GM18951 (cell line): ENCODE measurements at regions of chr12 and their contacts with region 1.

Region 1: DNA sequence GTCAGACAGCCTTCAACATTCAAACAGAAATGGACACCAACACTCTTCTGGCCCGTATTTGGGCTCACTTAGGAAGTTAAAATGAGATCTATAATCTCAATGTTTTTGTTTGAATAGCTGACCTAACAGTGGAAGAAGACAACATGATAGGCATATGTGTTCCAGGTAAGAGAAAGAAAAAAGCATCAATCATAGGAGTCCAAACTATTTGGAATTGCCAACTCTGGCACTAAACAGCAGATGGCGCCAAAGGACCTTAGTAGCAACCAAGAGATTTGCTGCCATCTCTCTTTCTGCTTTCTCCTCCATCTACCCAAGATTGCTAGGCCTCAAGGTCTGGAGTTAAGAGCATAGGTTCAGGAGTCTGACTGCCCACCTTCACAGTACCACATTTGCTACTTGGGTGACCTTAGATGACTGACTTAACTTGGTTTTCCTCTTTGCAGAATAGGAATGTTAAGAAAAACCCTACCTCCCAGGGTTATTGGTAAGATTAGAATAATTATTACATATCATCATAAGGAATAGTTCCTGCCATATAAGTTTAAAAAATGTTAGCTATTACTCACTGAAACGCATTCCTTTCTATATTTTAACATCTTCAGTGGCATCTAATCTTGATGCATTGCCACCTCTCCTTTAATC is 30.2 kb downstream of the PEX5 start:
- POLR2A ChIP-seq: no peak

Region 2: GRCh38 chr12:7460375-7461259 is 240.9 kb after region 1 on chr12:
- in situ Hi-C with region 1: loop called (anchors 10 kb)
- POLR2A ChIP-seq: no peak

Region 3: DNA sequence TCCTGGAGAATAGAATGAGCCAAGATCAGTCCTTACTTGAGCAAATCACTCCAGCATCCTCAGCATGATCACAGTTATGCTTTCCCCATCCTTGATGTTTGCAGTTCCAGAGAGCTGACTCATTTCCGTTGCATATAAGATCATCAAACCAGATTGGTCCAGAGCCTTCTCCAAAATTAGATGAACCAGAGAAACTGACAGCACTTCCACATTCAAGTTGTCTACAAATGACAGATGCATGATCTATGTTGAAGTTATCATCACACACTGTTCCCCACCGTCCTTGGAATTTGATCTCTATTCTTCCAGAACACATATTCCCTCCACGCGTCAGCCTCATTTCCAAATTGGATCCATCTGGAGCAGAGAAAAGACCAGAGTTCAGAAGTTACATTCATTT is 279.1 kb after region 1 on chr12:
- in situ Hi-C with region 1: no loop called
- POLR2A ChIP-seq: no peak

Region 4: DNA sequence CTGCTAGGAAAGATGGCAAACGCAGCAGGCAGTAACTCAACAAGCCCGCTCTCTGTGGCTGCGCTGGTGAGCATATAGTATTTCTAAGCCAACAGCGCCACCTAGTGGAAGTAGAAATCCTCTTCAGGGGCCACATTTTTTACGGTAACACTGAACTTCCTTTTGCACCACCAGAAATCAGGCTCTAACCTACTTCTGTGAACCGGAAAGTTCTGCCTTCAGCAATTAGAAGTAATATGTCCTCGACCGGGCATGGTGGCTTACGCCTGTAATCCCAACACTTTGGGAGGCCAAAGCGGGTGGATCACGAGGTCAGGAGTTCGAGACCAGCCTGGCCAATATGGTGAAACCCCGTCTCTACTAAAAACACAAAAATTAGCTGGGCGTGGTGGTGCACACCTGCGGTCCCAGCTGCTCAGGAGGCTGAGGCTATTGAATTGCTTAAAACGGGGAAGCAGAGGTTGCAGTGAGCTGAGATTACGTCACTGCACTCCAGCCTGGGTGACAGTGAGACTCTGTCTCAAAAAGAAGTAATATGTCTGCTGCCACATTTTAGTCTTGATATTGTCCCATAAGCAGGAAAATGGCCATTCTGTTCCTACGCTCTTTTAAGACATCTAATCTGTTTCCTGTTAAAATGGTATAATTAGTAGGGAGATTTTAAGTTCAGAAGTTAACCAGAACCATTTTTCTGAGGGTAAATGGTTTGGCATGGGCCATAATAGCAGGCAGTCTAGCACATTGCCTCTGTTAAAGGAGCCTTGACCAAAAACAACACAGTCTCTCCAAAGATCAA is 419.2 kb after region 1 on chr12:
- in situ Hi-C with region 1: loop called (anchors 10 kb)
- POLR2A ChIP-seq: no peak

Region 5: DNA sequence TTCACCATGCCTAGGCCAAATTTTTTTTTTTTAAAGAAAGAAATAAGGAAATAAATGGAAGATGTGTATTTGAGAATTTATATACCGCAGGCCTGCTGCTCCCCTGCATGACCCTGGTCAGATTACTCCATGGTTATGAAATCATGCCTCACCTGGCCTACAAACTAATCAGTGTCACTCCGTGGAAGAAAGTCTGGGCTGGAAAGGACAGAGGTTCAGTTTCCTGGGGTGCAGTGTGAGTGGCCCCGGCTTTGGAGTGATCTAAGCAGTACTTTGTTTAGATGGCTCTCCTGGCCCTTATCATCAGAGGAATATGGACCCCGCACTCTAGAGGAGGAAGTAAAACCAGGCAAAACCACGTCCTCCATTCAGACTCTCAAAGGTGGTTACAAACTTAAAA is 436.4 kb after region 1 on chr12:
- in situ Hi-C with region 1: no loop called
- POLR2A ChIP-seq: no peak